Lower leg skin (tissue), 4 donors: ENCODE measurements at regions of chr10 and their contacts with region 1.

Region 1: DNA sequence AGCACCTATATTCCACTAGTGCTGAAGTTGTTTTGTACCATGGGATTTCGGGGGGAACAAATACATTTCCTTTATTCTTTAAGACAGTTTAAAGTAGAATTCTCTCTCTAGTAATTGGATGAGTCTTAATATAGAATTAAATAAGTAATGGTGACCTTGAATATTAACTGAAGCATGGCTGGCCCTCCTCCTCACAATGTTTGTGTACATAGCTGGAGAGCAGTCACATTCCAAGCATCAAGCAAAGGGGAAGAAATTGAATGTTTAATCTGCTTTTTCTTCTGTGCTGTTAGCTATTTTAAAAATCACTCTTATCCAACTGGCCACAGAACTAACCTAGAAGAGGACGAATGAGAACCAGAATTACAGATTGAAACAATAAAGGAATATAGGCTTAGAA is 906.9 kb downstream of the CCSER2 start:
- DNase-seq: no peak
- H3K4me3 ChIP-seq: no peak overlapping the region
- CTCF ChIP-seq: no peak
- POLR2A ChIP-seq: no peak

Region 2: DNA sequence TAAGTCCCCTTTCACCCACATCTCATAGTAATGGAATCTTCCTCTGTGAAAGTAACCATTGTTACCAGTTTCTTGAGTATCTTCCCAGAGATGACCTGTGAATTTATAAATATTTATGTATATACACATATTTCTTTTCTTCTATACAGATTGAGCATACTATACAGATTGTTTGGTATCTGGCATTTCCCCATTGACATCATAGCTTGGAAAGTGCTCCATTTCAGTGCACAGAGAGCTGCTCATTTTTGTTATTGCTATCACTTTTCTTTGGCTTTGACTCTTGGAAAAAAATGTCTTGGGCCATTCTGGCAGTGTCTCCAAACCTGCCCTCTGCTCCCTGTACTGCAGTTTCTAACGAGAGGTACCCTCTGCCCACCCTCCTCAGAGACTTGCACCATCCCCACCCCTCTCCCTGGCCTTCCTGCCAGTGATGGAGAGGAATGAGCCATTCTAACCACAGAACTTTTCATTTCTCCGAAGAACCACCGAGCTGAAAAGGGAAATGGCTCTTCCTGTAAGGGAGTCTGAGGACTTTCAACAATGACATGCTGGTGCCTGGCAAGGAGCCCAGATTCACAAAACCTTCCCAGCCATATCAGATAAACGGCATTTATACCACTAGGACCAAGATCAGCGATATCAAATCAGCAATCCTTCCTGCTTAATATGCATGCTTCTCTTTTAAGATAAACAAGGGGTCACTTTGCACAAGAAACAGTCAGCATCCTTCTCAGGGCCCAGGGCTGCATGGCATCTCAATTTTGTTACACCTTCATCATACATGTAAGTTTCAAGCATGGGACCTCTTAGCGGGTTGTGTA is 926.6 kb before region 1 on chr10:
- intact Hi-C with region 1: no loop called
- DNase-seq: no peak
- H3K4me3 ChIP-seq: no peak overlapping the region
- CTCF ChIP-seq: no peak
- POLR2A ChIP-seq: no peak

Region 3: DNA sequence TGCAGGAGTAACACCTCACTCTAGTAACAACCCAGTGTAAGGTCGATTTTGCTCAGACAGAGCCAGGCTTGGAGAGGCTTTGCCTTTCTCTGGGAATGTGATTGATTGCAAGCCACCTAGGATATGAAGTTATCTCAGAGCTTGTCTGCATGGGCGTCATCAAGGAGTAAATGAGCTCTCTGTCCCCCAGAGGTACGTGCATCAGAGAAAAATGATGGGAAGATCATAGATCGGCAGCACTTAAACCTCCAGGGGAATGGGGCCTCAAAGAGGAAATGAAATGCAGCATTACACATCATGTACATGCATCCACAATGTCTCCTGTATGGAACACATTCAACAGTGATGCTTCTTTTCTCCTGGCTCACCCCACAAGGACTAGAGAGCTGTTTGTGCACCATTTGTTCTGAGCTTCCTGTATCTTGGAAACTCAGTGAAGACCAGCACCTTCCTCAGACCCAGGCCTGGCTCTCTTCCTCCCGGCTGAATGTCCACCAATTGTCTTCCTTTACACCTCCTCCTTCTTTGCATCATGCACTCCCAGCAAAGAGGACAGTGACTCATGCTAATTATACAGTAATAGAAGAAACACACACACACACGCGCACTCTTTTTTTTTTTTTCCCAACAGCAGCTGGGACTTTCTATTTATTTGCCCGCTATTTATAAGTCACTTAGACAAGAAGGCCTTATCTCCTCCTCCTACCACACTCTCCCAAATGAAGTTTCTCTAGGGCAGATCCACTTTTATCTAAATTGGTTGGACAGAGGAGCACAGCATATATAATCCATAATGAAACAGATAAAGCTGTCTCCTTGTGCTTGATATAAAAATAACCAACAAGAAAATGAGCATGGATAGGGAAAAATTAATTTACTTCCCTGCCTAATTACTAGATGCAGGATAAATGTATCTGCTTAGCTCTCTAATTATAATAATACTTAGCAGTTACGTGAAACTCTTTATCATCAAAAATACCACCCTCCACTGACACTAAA is 83.8 kb after region 1 on chr10:
- intact Hi-C with region 1: no loop called
- DNase-seq: no peak
- H3K4me3 ChIP-seq: no peak overlapping the region
- CTCF ChIP-seq: no peak
- POLR2A ChIP-seq: no peak

Region 4: GRCh38 chr10:85832988-85833387 is 597.7 kb after region 1 on chr10:
- intact Hi-C with region 1: loop called (anchors 10 kb)
- DNase-seq: peak in 1 of 2 donors; percentile 63
- H3K4me3 ChIP-seq: no peak overlapping the region
- CTCF ChIP-seq: no peak
- POLR2A ChIP-seq: no peak

Region 5: DNA sequence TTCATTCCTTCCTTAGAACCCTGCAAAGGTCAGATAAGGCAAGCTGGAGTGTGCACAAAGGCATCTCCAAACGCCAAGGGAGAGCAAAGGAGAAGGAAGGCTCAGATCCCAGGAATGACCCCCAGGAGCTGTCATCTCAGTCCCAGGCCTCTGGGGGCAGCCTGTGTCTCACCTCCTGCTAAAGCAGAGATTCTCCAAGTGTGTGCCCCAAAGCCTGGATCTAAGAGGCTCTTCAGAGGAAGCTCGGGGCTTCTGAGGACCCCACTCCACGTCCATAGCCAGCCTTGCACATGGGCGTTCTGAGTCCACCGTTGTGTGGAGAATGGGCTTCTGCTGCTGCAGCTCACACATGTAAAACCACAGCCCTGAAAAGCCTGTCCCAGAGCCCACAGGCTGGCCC is 1136.4 kb after region 1 on chr10:
- intact Hi-C with region 1: loop called (anchors 5 kb)
- DNase-seq: peak in 1 of 2 donors; percentile 57
- H3K4me3 ChIP-seq: no peak overlapping the region
- CTCF ChIP-seq: no peak
- POLR2A ChIP-seq: no peak